H1 (cell line): ENCODE measurements at regions of chr3 and their contacts with region 1.

Region 1: GRCh38 chr3:37967260-37967881 is 23.2 kb upstream of the VILL start:
- DNase-seq: peak; percentile 56 to 85
- H3K4me3 ChIP-seq: no peak overlapping the region
- H3K27ac ChIP-seq: no peak overlapping the region
- H3K4me1 ChIP-seq: peaks cover 0 to 7% (median 3%) of the 10 kb centered on the region in 4 experiments; a peak in 2 of 7 replicates
- H3K27me3 ChIP-seq: no peaks in the 10 kb centered on the region
- CTCF ChIP-seq: peak; percentile 91 to 98 (median 92)
- EP300 ChIP-seq: no peak
- POLR2A ChIP-seq: no peak
- RAD21 ChIP-seq: peak; percentile 84 to 90

Region 2: DNA sequence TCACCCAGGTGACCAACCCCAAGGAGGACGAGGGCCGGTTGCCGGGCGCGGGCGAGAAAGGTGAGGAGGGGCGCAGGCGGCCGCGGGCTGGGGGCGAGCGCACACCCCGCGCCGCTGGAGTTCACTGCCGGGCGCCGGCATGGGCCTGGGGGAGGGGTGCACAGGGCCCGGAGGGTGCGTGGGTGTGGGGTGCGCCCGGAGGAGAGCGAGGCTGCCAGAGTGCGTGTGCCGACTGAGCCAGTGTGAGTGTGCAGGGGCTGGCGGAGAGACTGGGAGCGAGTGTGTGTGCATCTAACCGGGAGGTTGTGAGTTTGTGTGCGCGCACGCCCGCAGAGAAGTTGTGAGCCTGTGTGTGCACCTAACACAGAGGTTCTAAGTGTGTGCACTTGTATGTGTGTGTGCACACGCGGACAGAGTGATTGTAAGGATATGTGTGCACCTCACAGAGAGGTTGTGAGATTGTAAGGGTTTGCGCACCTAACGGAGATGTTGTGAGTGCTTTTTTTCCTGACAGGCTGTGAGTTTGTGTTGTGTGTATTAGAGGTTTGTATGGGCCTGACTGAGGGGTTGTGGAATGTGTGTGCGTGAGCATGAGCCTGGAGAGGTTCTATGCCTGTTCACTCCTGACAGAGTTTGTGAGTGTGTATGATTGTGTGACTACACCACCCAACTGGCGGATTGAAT is 105.0 kb before region 1 on chr3:
- CTCF ChIA-PET with region 1: interaction called, 23 read pairs
- POLR2A ChIA-PET with region 1: interaction called, 3 read pairs
- DNase-seq: peak in 1 of 2 experiments; percentile 67
- H3K4me3 ChIP-seq: peak overlapping the region; percentile 61 to 94 (median 78)
- H3K27ac ChIP-seq: no peak overlapping the region
- H3K4me1 ChIP-seq: peaks cover 6 to 15% (median 11%) of the 10 kb centered on the region in 4 experiments
- H3K27me3 ChIP-seq: peaks cover 0 to 10% (median 7%) of the 10 kb centered on the region in 4 experiments; a peak in 4 of 7 replicates
- CTCF ChIP-seq: no peak
- EP300 ChIP-seq: no peak
- POLR2A ChIP-seq: no peak
- RAD21 ChIP-seq: no peak

Region 3: GRCh38 chr3:37885814-37886213 is 81.6 kb before region 1 on chr3:
- CTCF ChIA-PET with region 1: interaction called, 17 read pairs
- POLR2A ChIA-PET with region 1: no interaction called
- DNase-seq: no peak
- H3K4me3 ChIP-seq: no peak overlapping the region
- H3K27ac ChIP-seq: no peak overlapping the region
- H3K4me1 ChIP-seq: no peaks in the 10 kb centered on the region
- H3K27me3 ChIP-seq: no peaks in the 10 kb centered on the region
- CTCF ChIP-seq: no peak
- EP300 ChIP-seq: no peak
- POLR2A ChIP-seq: no peak
- RAD21 ChIP-seq: no peak

Region 4: GRCh38 chr3:37907906-37908305 is 59.5 kb before region 1 on chr3:
- CTCF ChIA-PET with region 1: interaction called, 20 read pairs
- POLR2A ChIA-PET with region 1: no interaction called
- DNase-seq: no peak
- H3K4me3 ChIP-seq: no peak overlapping the region
- H3K27ac ChIP-seq: no peak overlapping the region
- H3K4me1 ChIP-seq: peaks cover 1 to 14% (median 9%) of the 10 kb centered on the region in 4 experiments; a peak in 6 of 7 replicates
- H3K27me3 ChIP-seq: no peaks in the 10 kb centered on the region
- CTCF ChIP-seq: no peak
- EP300 ChIP-seq: no peak
- POLR2A ChIP-seq: no peak
- RAD21 ChIP-seq: no peak

Region 5: GRCh38 chr3:37934631-37935289 is 32.6 kb before region 1 on chr3:
- CTCF ChIA-PET with region 1: interaction called, 23 read pairs
- POLR2A ChIA-PET with region 1: no interaction called
- DNase-seq: no peak
- H3K4me3 ChIP-seq: no peak overlapping the region
- H3K27ac ChIP-seq: no peak overlapping the region
- H3K4me1 ChIP-seq: peaks cover 0 to 4% (median 1%) of the 10 kb centered on the region in 4 experiments; a peak in 2 of 7 replicates
- H3K27me3 ChIP-seq: no peaks in the 10 kb centered on the region
- CTCF ChIP-seq: no peak
- EP300 ChIP-seq: no peak
- POLR2A ChIP-seq: no peak
- RAD21 ChIP-seq: no peak

Region 6: GRCh38 chr3:37956723-37957528 is 10.4 kb before region 1 on chr3:
- CTCF ChIA-PET with region 1: interaction called, 32 read pairs
- POLR2A ChIA-PET with region 1: interaction called, 4 read pairs
- DNase-seq: no peak
- H3K4me3 ChIP-seq: no peak overlapping the region
- H3K27ac ChIP-seq: 0 out of 2 replicates have a peak overlapping the region, but pooled peaks have one; percentile 38
- H3K4me1 ChIP-seq: peaks cover 0 to 11% (median 7%) of the 10 kb centered on the region in 4 experiments; a peak in 3 of 7 replicates
- H3K27me3 ChIP-seq: no peaks in the 10 kb centered on the region
- CTCF ChIP-seq: no peak
- EP300 ChIP-seq: no peak
- POLR2A ChIP-seq: no peak
- RAD21 ChIP-seq: no peak

Region 7: DNA sequence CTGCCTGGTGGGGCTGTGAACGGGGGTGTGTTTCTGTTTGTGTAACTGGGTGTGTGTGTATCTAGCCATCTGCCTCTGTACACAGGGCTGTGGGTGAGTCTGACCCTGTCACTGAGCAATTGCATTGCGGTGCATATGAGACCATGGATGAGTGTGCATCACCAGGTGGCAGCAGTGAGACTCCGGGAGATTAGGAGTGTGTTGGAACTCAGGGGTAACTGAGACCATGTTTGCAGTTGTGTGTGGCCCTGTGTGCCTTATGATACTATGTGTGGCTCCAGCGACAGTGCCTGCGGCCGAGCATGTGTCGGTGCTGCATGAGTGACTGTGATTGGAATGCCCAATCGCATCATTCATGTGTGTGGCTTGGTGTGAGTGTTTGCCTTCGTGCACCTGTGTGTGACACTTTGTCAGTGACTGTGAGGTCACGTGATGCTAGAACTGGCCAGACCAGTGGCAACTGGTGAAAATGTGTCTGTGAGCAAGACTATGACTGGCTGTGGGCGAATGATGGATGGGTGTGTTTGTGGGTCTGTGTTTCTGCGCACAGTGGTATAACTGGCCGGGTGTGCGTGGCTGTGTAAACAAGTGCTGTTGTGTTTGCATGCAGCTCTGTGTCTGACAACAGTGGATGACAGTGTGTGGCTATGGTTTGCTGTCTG is 37.2 kb after region 1 on chr3:
- CTCF ChIA-PET with region 1: interaction called, 45 read pairs
- POLR2A ChIA-PET with region 1: no interaction called
- DNase-seq: peak in 1 of 2 experiments; percentile 70
- H3K4me3 ChIP-seq: no peak overlapping the region
- H3K27ac ChIP-seq: no peak overlapping the region
- H3K4me1 ChIP-seq: no peaks in the 10 kb centered on the region
- H3K27me3 ChIP-seq: no peaks in the 10 kb centered on the region
- CTCF ChIP-seq: peak in 2 of 3 experiments; percentile 59 to 79; a peak in 3 of 4 replicates
- EP300 ChIP-seq: no peak
- POLR2A ChIP-seq: no peak
- RAD21 ChIP-seq: peak; percentile 53 to 58